CD8-positive, alpha-beta T cell (primary cell): ENCODE measurements at regions of chr22 and their contacts with region 1.

Region 1: DNA sequence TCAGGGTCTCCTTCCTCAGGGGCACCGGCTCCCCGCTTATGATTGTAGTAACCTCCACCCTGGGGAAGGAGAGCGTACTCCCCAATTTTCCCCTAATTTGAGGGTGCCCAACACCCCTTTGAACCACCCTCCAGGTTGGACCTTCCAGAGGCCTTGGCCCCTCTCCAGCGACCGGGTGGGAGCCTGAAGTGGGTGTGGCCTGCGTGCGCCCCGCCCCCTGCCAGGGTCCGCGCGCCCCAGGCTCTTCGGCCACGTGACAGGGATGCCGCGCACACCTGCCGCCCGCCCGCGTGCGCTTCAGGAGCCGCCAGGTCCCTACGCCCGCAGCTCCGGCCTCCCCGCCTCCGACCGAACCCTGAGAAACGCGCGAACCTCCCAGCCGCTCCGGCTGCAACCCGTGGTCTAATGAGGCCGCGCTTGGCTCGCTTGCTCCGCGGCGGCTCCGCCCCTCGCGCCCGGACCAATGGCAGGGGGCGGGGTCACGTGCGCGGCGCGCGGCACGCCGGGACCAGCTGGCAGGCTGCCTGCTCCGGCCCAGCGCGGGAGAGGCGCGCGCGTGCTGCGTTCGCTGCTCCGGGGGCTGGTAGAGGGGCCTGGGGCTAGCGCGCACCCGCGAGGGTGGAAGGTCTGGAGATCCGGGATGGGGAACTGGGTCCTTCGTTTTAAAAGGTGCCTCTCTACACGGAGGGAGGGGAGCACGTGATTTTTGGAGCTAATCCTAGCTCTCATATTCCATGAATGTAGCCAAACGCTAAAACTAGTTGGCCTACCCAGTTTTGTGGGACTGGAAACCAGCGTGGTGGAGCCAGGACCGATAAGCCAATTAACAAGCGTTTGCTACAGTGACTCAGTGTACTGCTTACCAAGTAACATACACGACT is at the start of gene FOXRED2:
- DNase-seq: peak; percentile 77 to 94 (median 88)
- ATAC-seq: peak; percentile 94
- H3K4me3 ChIP-seq: peak within 1 kb of the TSS; percentile 53 to 82
- H3K4me3 Mint-ChIP-seq: peak within 1 kb of the TSS; percentile 73
- H3K27ac ChIP-seq: peak within 1 kb of the TSS; percentile 41 to 62
- H3K27ac Mint-ChIP-seq: peak within 1 kb of the TSS; percentile 55
- H3K4me1 ChIP-seq: peaks cover 16% of the 10 kb centered on the region
- H3K4me1 Mint-ChIP-seq: peaks cover 13% of the 10 kb centered on the region
- H3K27me3 ChIP-seq: no peaks in the 10 kb centered on the region
- H3K27me3 Mint-ChIP-seq: no peaks in the 10 kb centered on the region
- CTCF ChIP-seq: no peak
- total RNA-seq, gene FOXRED2: 2.1 TPM

Region 2: GRCh38 chr22:35399678-35400334 is 1107.1 kb before region 1 on chr22 and contains the start of gene MCM5:
- CTCF ChIA-PET with region 1: no interaction called
- POLR2A ChIA-PET with region 1: no interaction called
- intact Hi-C with region 1: loop called in 1 of 2 experiments (anchors 5 kb)
- DNase-seq: peak; percentile 94 to 99 (median 97)
- ATAC-seq: peak; percentile 98
- H3K4me3 ChIP-seq: peak within 1 kb of the TSS; percentile 75 to 98
- H3K4me3 Mint-ChIP-seq: peak within 1 kb of the TSS; percentile 98
- H3K27ac ChIP-seq: peak within 1 kb of the TSS; percentile 73 to 75
- H3K27ac Mint-ChIP-seq: peak within 1 kb of the TSS; percentile 97
- H3K4me1 ChIP-seq: peaks cover 13% of the 10 kb centered on the region
- H3K4me1 Mint-ChIP-seq: peaks cover 17% of the 10 kb centered on the region
- H3K27me3 ChIP-seq: no peaks in the 10 kb centered on the region
- H3K27me3 Mint-ChIP-seq: no peaks in the 10 kb centered on the region
- CTCF ChIP-seq: no peak
- total RNA-seq, gene MCM5: 29.3 to 32.0 TPM

Region 3: DNA sequence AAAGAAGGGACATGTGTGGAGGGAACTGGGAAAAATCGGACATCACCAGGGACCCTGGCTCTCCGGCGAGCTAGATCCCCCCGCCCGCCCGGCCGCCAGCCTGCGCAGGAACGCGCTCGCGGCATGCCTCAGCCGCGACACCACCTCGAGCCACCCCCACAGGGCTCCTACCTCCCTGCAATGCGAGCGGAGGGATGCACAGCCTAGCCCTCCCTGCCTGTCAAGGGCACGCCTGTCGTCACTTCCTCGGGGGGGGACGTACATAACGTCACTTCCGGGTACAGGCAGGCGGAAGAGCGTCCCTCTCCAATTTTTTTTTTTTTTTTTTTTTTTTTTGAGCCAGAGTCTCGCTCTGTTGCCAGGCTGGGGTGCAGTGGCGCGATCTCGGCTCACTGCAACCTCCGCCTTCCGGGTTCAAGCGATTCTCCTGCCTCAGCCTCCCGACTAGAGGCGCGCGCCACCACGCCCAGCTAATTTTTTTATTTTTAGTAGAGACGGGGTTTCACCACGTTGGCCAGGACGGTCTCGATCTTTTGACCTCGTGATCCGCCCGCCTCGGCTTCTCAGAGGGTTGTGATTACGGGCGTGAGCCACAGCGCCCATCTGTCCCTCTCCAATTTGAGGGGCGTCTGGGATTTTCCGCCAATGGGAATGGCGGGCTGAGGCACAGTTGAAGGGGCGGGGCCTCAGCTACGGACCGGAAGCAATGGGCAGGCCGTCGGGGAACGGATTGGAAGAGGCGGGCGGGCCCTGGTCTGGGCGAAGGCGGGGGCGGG is 25.3 kb before region 1 on chr22 and contains the start of gene TXN2:
- CTCF ChIA-PET with region 1: interaction called, 10 read pairs
- POLR2A ChIA-PET with region 1: interaction called, 7 read pairs
- intact Hi-C with region 1: loop called (anchors 1 kb)
- DNase-seq: peak; percentile 91 to 99 (median 97)
- ATAC-seq: peak; percentile 85
- H3K4me3 ChIP-seq: peak within 1 kb of the TSS; percentile 68
- H3K4me3 Mint-ChIP-seq: peak within 1 kb of the TSS; percentile 95
- H3K27ac ChIP-seq: peak within 1 kb of the TSS; percentile 77 to 99
- H3K27ac Mint-ChIP-seq: peak within 1 kb of the TSS; percentile 97
- H3K4me1 ChIP-seq: peaks cover 13% of the 10 kb centered on the region
- H3K4me1 Mint-ChIP-seq: peaks cover 16% of the 10 kb centered on the region
- H3K27me3 ChIP-seq: no peaks in the 10 kb centered on the region
- H3K27me3 Mint-ChIP-seq: no peaks in the 10 kb centered on the region
- CTCF ChIP-seq: no peak
- total RNA-seq, gene TXN2: 24.4 to 29.0 TPM

Region 4: DNA sequence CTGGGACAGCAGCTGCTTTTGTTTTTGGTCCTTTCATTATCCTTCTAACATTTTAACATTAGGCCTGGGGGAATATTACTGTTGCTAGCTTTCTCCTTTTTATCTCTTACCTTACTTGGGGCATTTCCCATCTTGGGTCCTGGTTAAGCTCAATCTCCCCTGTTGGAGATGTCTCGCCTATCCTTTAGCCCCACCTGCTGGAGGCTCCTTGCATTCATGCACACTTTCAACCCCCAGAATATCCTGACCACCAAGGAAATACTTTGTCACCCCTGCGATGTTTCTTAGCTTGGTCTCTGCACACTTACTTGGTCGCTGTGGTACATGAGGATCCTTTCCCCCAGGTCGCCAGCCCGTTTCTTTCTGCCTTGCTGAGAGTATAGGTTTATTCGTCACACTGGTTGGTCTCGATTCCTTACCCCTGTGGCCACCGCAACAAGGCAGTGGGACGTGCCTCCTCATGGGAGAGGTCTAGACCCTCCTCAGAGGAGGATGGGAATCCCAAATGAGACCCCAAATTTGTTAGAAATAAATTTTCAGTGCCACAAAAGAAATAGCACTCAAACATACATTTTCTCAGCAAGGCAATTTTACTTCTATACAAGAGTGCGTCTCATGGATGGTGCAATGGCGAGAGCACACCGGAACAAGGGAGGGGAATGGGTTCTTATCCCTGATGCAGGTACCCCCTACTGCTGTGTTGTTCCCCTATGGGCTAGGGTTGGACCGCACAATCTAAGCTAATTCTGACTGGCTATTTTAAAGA is 20.1 kb before region 1 on chr22:
- CTCF ChIA-PET with region 1: interaction called, 10 read pairs
- POLR2A ChIA-PET with region 1: interaction called, 7 read pairs
- intact Hi-C with region 1: loop called (anchors 1 kb)
- DNase-seq: peak; percentile 31 to 84 (median 71)
- ATAC-seq: no peak
- H3K4me3 ChIP-seq: no peak overlapping the region
- H3K4me3 Mint-ChIP-seq: no peak overlapping the region
- H3K27ac ChIP-seq: no peak overlapping the region
- H3K27ac Mint-ChIP-seq: no peak overlapping the region
- H3K4me1 ChIP-seq: peaks cover 3% of the 10 kb centered on the region
- H3K4me1 Mint-ChIP-seq: peaks cover 5% of the 10 kb centered on the region
- H3K27me3 ChIP-seq: no peaks in the 10 kb centered on the region
- H3K27me3 Mint-ChIP-seq: no peaks in the 10 kb centered on the region
- CTCF ChIP-seq: peak; percentile 62

Region 5: GRCh38 chr22:36520423-36520822 is 13.5 kb after region 1 on chr22:
- CTCF ChIA-PET with region 1: interaction called, 21 read pairs
- POLR2A ChIA-PET with region 1: interaction called, 7 read pairs
- intact Hi-C with region 1: no loop called
- DNase-seq: no peak
- ATAC-seq: no peak
- H3K4me3 ChIP-seq: no peak overlapping the region
- H3K4me3 Mint-ChIP-seq: no peak overlapping the region
- H3K27ac ChIP-seq: no peak overlapping the region
- H3K27ac Mint-ChIP-seq: no peak overlapping the region
- H3K4me1 ChIP-seq: no peaks in the 10 kb centered on the region
- H3K4me1 Mint-ChIP-seq: no peaks in the 10 kb centered on the region
- H3K27me3 ChIP-seq: no peaks in the 10 kb centered on the region
- H3K27me3 Mint-ChIP-seq: no peaks in the 10 kb centered on the region
- CTCF ChIP-seq: no peak

Region 6: GRCh38 chr22:36528795-36529751 is 22.2 kb after region 1 on chr22 and contains the start of gene EIF3D:
- CTCF ChIA-PET with region 1: interaction called, 21 read pairs
- POLR2A ChIA-PET with region 1: interaction called, 9 read pairs
- intact Hi-C with region 1: loop called (anchors 1 kb)
- DNase-seq: peak; percentile 95 to 100 (median 98)
- ATAC-seq: peak; percentile 92
- H3K4me3 ChIP-seq: peak within 1 kb of the TSS; percentile 67 to 90
- H3K4me3 Mint-ChIP-seq: peak within 1 kb of the TSS; percentile 90
- H3K27ac ChIP-seq: peak within 1 kb of the TSS; percentile 91 to 93
- H3K27ac Mint-ChIP-seq: peak within 1 kb of the TSS; percentile 99
- H3K4me1 ChIP-seq: peaks cover 12% of the 10 kb centered on the region
- H3K4me1 Mint-ChIP-seq: peaks cover 24% of the 10 kb centered on the region
- H3K27me3 ChIP-seq: no peaks in the 10 kb centered on the region
- H3K27me3 Mint-ChIP-seq: no peaks in the 10 kb centered on the region
- CTCF ChIP-seq: no peak
- total RNA-seq, gene EIF3D: 302 to 315 TPM

Region 7: DNA sequence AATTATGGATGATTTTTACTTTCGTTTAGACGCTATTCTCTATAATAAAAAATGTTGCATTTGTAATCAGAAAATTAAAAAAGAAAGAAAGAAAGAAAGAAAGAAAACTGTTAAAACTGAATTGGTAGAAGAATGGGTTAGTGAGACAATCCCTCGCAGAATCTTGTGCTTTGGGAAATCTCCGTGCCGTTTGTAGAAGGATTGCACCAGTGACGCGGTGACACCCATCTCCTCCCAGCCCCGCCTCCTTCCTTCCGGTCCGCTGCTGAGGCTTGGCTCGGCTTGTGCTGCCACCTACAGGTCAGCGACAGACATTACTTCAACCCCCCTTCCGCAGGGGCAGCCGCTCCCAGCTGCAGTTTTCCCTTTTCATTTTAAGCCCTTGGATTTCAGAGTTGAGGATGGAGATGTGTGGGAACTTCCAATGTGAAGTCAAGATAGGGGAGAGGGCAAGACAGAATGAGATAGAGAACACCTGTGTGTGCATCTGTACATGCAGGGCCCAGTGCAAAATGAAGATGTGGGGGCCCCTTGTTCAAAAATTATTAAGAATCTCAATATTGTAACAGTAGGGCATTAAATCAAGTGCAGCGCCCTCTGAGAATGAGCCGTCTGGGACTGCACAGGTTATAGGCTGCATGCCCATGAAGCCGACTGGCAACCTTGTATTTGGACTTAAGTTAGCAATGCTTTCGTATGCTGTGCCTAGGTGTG is 471.2 kb after region 1 on chr22:
- CTCF ChIA-PET with region 1: no interaction called
- POLR2A ChIA-PET with region 1: no interaction called
- intact Hi-C with region 1: loop called in 1 of 2 experiments (anchors 2 kb)
- DNase-seq: peak; percentile 78 to 95 (median 91)
- ATAC-seq: peak; percentile 90
- H3K4me3 ChIP-seq: peak overlapping the region; percentile 50 to 70
- H3K4me3 Mint-ChIP-seq: peak overlapping the region; percentile 97
- H3K27ac ChIP-seq: peak overlapping the region; percentile 64 to 70
- H3K27ac Mint-ChIP-seq: peak overlapping the region; percentile 95
- H3K4me1 ChIP-seq: peaks cover 4% of the 10 kb centered on the region
- H3K4me1 Mint-ChIP-seq: peaks cover 6% of the 10 kb centered on the region
- H3K27me3 ChIP-seq: no peaks in the 10 kb centered on the region
- H3K27me3 Mint-ChIP-seq: no peaks in the 10 kb centered on the region
- CTCF ChIP-seq: peak; percentile 69